ENCODE measurements at regions of chr6 and their contacts with region 1.

Region 1: DNA sequence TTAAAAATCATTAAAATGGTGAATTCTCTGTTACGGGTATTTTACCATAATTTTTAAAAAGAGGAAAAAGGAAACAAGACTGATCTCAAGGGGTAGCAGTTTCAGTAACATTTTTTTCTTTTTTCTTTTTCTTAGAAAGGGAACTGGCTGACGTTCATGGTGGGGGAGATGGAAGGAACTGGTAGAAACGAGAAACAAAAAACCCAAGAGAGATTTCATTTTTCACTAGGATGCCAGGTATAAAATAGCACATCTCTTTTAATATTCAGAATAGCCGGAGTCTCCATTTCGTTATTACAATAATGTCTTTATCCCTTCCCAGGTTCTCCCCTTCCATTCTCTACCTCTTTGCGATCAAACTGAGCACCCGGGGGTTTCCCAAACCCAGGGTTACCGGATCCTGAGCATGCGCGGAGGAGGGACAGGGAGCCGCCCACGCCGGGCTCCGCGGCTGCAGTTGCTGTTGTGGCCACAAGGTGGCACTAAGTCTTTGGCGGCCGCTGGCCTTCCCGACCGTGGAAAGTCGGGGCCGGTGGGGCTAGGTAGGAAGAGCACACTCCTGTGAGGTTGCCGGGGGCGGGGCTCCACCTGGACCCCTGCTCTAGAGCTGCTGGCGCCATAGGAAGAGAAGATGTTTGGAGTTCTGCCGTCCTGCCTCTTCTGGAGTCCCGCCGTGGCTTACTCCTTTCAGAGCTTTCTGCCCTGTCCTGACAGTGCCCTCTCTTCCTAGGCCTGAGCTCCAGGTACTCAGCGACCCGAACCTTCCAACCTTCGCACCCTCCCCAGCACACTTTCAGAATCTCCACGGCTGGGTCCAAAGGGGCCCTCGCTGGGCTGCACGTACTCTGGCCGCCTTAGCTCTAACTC is 146.8 kb downstream of the SH3BGRL2 start:
- DNase-seq: peak; percentile 79
- ATAC-seq: peak; percentile 95
- H3K4me3 Mint-ChIP-seq: peak overlapping the region; percentile 79
- H3K27ac Mint-ChIP-seq: peak overlapping the region; percentile 38
- H3K4me1 Mint-ChIP-seq: peaks cover 8% of the 10 kb centered on the region
- H3K27me3 Mint-ChIP-seq: no peaks in the 10 kb centered on the region
- CTCF ChIP-seq: peak; percentile 78

Region 2: GRCh38 chr6:79233611-79234149 is 544.3 kb before region 1 on chr6:
- CTCF ChIA-PET with region 1: no interaction called
- POLR2A ChIA-PET with region 1: no interaction called
- intact Hi-C with region 1: loop called (anchors 2 kb)
- DNase-seq: peak; percentile 63
- ATAC-seq: peak; percentile 57
- H3K4me3 Mint-ChIP-seq: peak overlapping the region; percentile 96
- H3K27ac Mint-ChIP-seq: peak overlapping the region; percentile 89
- H3K4me1 Mint-ChIP-seq: peaks cover 14% of the 10 kb centered on the region
- H3K27me3 Mint-ChIP-seq: no peaks in the 10 kb centered on the region
- CTCF ChIP-seq: no peak

Region 3: GRCh38 chr6:79742030-79742429 is 35.9 kb before region 1 on chr6:
- CTCF ChIA-PET with region 1: no interaction called
- POLR2A ChIA-PET with region 1: no interaction called
- intact Hi-C with region 1: no loop called
- DNase-seq: no peak
- ATAC-seq: no peak
- H3K4me3 Mint-ChIP-seq: no peak overlapping the region
- H3K27ac Mint-ChIP-seq: no peak overlapping the region
- H3K4me1 Mint-ChIP-seq: no peaks in the 10 kb centered on the region
- H3K27me3 Mint-ChIP-seq: no peaks in the 10 kb centered on the region
- CTCF ChIP-seq: no peak

Region 4: GRCh38 chr6:79813854-79814709 is 36.1 kb after region 1 on chr6:
- CTCF ChIA-PET with region 1: interaction called, 4 read pairs
- POLR2A ChIA-PET with region 1: interaction called, 4 read pairs
- intact Hi-C with region 1: loop called (anchors 1 kb)
- DNase-seq: peak; percentile 22
- ATAC-seq: peak; percentile 60
- H3K4me3 Mint-ChIP-seq: no peak overlapping the region
- H3K27ac Mint-ChIP-seq: no peak overlapping the region
- H3K4me1 Mint-ChIP-seq: no peaks in the 10 kb centered on the region
- H3K27me3 Mint-ChIP-seq: no peaks in the 10 kb centered on the region
- CTCF ChIP-seq: no peak

Region 5: GRCh38 chr6:79993012-79993910 is 215.3 kb after region 1 on chr6:
- CTCF ChIA-PET with region 1: no interaction called
- POLR2A ChIA-PET with region 1: no interaction called
- intact Hi-C with region 1: no loop called
- DNase-seq: no peak
- ATAC-seq: no peak
- H3K4me3 Mint-ChIP-seq: no peak overlapping the region
- H3K27ac Mint-ChIP-seq: no peak overlapping the region
- H3K4me1 Mint-ChIP-seq: no peaks in the 10 kb centered on the region
- H3K27me3 Mint-ChIP-seq: peaks cover 4% of the 10 kb centered on the region
- CTCF ChIP-seq: no peak

Region 6: DNA sequence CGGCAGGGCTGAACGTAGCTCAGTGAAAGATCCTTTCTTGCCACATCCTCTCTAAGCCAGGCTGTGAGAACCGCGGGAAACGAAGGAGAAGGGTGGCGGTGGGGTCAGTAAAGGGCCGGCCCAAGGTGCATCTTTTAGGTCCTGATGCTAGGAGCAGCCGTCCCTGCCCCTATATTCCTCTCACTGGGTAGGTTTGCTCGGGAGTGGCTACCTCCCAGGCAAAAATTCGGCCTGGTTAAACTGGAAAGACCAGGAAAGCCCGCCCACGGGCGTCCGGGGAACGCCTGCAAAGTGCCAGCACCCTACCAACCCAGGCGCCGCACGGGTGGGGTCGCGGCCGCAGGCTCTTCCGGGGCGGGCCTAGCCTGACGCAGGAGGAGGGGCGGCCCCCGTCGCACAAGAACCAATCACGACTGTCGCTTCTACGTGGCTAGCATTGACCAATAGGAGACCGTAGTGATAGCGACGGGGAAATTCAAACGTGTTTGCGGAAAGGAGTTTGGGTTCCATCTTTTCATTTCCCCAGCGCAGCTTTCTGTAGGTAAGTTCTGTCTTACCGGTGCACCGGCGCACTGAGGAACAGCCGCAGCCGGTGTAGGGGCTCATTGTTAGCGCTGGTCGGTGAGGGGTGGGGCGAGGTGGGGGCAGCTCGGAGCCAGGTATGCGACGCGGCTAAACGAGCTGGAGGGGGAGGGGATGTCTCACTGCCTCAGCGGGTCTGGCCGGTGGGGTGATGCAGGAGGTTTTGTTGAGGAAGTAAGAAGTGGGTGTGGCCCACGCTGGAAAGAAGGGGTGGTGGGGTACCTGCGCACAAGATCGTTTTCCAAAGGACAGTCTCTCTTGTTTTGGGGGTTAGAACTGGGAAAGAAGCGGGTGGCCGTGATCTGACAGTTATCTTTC is 226.5 kb after region 1 on chr6 and contains the start of gene TTK:
- CTCF ChIA-PET with region 1: no interaction called
- POLR2A ChIA-PET with region 1: no interaction called
- intact Hi-C with region 1: loop called (anchors 1 kb)
- DNase-seq: peak; percentile 82
- ATAC-seq: peak; percentile 100
- H3K4me3 Mint-ChIP-seq: peak within 1 kb of the TSS; percentile 93
- H3K27ac Mint-ChIP-seq: peak within 1 kb of the TSS; percentile 86
- H3K4me1 Mint-ChIP-seq: peaks cover 20% of the 10 kb centered on the region
- H3K27me3 Mint-ChIP-seq: no peaks in the 10 kb centered on the region
- CTCF ChIP-seq: no peak
- total RNA-seq, gene TTK: 1.9 and 2.3 TPM in 2 replicates

Region 7: GRCh38 chr6:80106418-80107235 is 328.7 kb after region 1 on chr6 and contains the start of gene BCKDHB:
- CTCF ChIA-PET with region 1: no interaction called
- POLR2A ChIA-PET with region 1: interaction called, 3 read pairs
- intact Hi-C with region 1: loop called (anchors 2 kb)
- DNase-seq: peak; percentile 89
- ATAC-seq: peak; percentile 98
- H3K4me3 Mint-ChIP-seq: peak within 1 kb of the TSS; percentile 91
- H3K27ac Mint-ChIP-seq: peak within 1 kb of the TSS; percentile 85
- H3K4me1 Mint-ChIP-seq: peaks cover 18% of the 10 kb centered on the region
- H3K27me3 Mint-ChIP-seq: peaks cover 7% of the 10 kb centered on the region
- CTCF ChIP-seq: no peak
- total RNA-seq, gene BCKDHB: 16.6 and 17.0 TPM in 2 replicates

Measured in activated B cell treated with CpG ODN at 0.5 μM for 24 hours (primary cell).